Esophagus muscularis mucosa (tissue), 4 donors: ENCODE measurements at regions of chr2 and their contacts with region 1.

Region 1: DNA sequence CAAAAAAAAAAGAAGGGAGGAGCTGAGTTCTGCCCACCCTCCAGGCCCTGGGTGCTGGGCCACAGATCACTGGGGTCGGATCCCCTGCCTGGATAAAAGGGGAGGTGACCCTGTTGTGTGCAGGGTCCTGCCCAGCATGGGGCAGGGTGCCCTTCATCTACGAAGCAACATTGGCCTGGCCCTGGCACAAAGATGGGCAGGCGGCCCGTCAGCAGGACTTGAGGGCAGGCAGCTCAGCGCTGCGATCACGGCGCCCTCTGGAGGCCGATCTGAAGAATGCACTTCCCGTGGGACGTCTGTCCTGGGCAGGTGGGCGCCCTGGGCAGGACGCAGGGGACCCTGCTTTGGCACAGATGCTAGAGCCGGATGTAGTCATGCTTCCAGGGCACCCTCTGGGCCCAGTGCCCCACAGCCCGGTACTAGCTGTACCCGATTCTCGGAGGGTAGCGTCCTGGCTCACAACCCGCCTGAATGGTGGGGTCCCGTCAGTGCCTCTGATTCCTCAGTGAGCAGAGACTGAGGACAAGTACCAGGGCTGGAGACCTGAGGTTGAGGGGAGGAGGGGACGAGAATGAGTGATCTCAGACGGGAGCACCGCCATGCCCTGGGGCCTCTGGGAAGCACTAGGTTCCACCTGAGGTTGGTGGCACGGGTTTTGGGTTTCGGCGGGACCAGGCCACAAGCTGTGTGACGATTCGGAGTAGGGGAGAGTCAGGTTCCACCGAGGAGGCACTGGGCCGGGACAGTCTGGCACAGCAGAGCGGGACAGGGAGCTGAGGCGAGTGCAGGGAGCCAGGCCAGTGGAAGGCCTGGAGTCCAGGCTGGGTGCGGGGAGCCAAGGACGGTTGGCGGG is 18.0 kb downstream of the ARID5A start:
- DNase-seq: no peak
- H3K4me3 ChIP-seq: peak overlapping the region in 3 of 4 donors; percentile 8 to 25 (median 19)
- H3K27ac ChIP-seq: peak overlapping the region in 2 of 4 donors; percentile 8 to 30
- H3K4me1 ChIP-seq: peaks cover 8 to 21% (median 14%) of the 10 kb centered on the region in 4 donors
- H3K27me3 ChIP-seq: no peaks in the 10 kb centered on the region
- CTCF ChIP-seq: peak; percentile 92 to 99 (median 97)
- EP300 ChIP-seq: no peak
- POLR2A ChIP-seq: no peak

Region 2: DNA sequence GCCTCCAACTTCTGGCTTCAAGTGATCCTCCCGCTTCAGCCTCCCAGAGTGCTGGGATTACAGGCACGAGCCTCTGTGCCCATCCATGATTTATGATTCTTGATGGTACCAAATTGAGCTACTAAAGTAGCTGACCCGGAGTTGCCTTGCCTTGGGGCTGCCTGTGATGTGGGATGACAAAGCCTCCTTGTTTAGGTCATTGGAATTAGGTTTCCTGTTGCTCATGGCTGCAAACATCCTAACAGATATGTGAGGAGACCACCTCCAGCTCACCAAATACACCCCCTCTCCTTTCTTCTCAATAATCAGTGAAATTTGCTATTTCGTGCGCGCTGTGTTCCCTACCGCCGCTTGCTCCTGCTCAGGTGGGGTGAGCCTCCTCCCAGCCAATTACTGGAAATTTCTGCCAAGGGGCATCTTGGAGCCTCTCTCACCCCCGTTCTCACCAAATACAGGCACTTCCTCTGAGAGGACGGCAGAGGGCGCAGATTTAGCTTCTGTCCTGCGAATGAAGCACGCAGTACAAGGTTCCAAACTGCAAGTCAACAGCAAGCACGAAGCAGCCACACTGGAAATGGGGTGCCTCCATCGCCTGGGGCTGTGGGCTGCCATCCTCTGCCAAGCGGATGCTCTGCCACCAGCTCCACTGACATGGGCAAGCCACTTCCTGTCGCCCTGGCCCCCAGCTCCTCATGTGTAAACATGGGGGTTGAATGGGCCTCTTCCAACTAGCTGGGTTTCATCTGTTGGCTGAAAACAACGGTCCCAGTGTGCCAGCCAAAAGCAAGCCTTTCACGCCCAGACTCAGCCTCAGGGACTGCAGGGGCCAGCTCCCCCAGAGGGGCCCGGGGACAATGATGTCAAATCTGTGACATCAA is 147.2 kb before region 1 on chr2:
- intact Hi-C with region 1: loop called (anchors 5 kb)
- DNase-seq: no peak
- H3K4me3 ChIP-seq: no peak overlapping the region
- H3K27ac ChIP-seq: no peak overlapping the region
- H3K4me1 ChIP-seq: peaks cover 13 to 24% (median 18%) of the 10 kb centered on the region in 4 donors
- H3K27me3 ChIP-seq: peaks cover 0 to 26% (median 0%) of the 10 kb centered on the region in 4 donors
- CTCF ChIP-seq: peak; percentile 74 to 85 (median 74)
- EP300 ChIP-seq: no peak
- POLR2A ChIP-seq: no peak

Region 3: DNA sequence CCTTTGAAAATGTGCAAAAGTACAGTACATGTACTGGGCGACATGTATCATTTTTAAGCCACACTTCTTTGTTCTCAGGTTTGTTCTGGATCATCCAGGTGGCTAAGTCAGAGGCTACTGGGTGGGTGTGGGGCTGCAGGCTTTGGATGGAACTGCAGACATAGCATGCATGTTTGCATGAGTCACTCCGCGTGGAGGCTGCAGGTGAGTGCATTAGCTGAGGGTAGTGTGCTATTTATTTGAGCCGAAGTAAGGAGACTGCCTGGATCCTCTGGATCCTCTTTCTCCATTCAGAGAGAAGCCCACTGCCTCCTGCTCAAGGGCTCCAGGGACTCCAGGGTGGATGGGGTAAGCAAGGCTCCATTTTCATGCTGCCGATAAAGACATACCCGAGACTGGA is 40.0 kb before region 1 on chr2:
- intact Hi-C with region 1: loop called (anchors 5 kb)
- DNase-seq: no peak
- H3K4me3 ChIP-seq: no peak overlapping the region
- H3K27ac ChIP-seq: no peak overlapping the region
- H3K4me1 ChIP-seq: peaks cover 0 to 2% (median under 1%) of the 10 kb centered on the region in 4 donors
- H3K27me3 ChIP-seq: no peaks in the 10 kb centered on the region
- CTCF ChIP-seq: no peak
- EP300 ChIP-seq: no peak
- POLR2A ChIP-seq: no peak

Region 4: DNA sequence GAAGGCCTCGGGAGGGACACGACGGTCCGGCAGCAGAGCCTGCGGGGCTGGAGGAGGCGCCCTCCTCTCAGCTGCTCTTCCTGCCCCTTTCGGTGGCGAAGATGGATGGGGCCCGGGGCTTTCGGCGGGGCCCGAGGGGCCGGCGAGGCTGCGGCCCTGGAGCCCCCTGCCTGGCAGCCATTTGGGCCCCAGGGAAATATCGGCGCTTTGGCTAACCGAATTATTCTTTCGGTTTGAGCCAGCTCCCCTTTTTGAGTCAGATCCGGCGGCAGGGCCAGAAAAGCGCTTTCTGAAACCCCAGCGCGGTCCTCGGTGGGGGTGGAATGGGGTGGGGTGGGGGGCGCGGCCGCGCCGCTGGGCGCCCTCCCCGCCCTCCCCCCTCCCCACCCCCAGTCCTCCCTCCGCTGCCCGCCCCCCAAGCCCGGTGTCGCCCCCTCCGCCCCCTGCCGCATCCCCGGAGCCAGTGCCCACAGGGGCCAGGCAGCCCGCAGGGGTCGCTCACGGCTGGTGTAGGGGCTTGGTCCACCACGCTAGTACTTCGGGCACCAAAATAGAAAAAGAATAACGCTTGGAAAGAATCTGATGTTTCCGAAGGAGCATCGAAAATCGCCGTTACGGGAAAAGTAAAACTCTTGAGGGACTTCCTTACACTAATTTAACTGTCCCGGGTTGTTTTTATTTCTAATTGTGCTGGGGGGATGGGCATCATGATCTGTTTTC is 27.1 kb before region 1 on chr2:
- intact Hi-C with region 1: loop called (anchors 2 kb)
- DNase-seq: no peak
- H3K4me3 ChIP-seq: peak overlapping the region; percentile 61 to 77 (median 74)
- H3K27ac ChIP-seq: peak overlapping the region; percentile 93 to 100 (median 98)
- H3K4me1 ChIP-seq: peaks cover 45 to 60% (median 53%) of the 10 kb centered on the region in 4 donors
- H3K27me3 ChIP-seq: no peaks in the 10 kb centered on the region
- CTCF ChIP-seq: peak; percentile 38 to 59 (median 42)
- EP300 ChIP-seq: no peak
- POLR2A ChIP-seq: no peak

Region 5: DNA sequence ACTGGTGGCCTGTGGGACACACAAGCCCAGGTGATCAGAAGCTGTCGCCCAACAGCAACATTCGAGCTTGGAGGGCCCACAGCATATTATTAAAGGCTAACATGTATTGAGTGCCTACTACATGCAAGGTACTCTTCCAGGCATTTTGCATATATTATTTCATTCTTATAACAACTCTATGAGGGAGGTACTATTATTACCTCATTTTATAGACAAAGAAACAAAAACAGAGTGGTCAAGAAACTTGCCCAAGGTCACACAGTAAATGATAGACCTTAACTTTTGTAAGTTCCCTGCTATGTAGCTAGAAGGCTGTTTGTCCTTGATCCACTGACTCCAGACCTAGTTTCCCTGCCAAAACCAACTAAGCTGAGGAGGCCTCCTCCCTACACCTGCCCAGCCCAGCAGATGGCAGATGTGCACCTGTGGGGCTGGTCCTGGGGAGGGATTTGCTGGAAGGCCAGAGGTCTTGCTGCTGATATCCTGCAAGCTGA is 47.9 kb after region 1 on chr2:
- intact Hi-C with region 1: no loop called
- DNase-seq: no peak
- H3K4me3 ChIP-seq: no peak overlapping the region
- H3K27ac ChIP-seq: peak overlapping the region in 1 of 4 donors; percentile 30
- H3K4me1 ChIP-seq: peaks cover 0 to 26% (median 10%) of the 10 kb centered on the region in 4 donors
- H3K27me3 ChIP-seq: no peaks in the 10 kb centered on the region
- CTCF ChIP-seq: no peak
- EP300 ChIP-seq: no peak
- POLR2A ChIP-seq: no peak

Region 6: DNA sequence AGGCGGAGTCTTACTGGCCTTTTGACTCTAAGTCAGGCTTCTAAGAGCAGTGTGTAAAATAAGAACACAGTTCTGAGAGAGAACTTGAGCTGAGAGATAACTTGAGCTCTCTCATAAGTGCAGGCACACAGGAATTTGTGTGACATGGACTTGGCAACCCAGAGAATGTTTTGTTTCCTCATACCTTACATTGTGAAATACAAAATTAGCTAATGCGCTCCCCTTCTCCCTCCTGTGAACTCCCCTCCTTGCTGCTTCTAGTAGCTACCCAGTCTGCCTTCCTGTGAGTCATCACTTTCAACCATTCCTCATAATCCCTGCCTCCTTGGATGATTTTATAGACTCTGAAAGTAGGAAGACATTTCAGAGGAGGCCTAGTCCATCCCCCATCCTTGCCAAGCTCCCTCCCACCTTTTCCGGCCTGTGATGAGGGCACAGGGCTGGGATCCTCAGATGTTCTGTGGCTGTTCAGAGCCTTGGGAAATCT is 110.6 kb after region 1 on chr2:
- intact Hi-C with region 1: no loop called
- DNase-seq: no peak
- H3K4me3 ChIP-seq: no peak overlapping the region
- H3K27ac ChIP-seq: peak overlapping the region; percentile 67 to 79 (median 76)
- H3K4me1 ChIP-seq: peaks cover 12 to 16% (median 13%) of the 10 kb centered on the region in 4 donors
- H3K27me3 ChIP-seq: no peaks in the 10 kb centered on the region
- CTCF ChIP-seq: no peak
- EP300 ChIP-seq: no peak
- POLR2A ChIP-seq: no peak